ENCODE measurements at regions of chr4 and their contacts with region 1.

Region 1: GRCh38 chr4:54322818-54323417 is 93.8 kb downstream of the PDGFRA start:
- DNase-seq: peak; percentile 21
- H3K4me3 Mint-ChIP-seq: no peak overlapping the region
- H3K27ac Mint-ChIP-seq: no peak overlapping the region
- H3K4me1 Mint-ChIP-seq: peaks cover 15% of the 10 kb centered on the region
- H3K27me3 Mint-ChIP-seq: no peaks in the 10 kb centered on the region

Region 2: DNA sequence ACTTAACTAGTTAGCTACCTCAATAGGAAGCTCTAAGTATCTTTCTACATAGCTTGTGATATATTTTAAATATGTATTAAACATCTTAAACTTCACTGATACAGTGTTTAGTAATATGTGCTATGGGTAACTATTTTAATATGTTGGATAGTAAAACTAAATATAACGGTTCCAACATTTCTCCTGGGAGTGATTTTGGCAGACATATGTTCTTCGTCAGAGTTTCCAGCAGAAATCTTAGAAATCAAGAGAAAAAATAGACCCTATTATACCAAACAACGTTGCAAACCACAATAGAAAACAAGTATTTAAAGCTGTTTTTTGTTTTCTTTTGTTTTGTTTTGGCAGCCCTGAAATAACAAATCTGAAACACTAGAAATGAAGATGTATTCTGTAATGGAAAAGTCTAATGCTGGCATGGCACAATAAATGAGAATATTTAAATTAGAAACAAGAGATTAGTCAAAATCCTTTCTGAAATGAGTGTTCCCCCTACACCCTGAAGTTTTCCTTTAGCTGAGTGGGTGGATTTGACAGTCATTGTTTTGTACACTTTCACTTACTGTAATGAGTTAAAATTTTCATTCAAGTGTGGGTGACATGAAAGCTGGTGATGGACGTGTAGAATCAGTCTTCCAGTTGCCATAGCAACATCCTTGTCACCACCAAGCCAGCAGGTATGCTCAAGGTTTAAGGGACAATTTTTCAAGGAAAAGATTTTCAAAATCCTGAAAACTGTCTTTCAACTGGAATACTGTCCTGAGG is 1190.6 kb before region 1 on chr4:
- intact Hi-C with region 1: loop called (anchors 5 kb)
- DNase-seq: no peak
- H3K4me3 Mint-ChIP-seq: no peak overlapping the region
- H3K27ac Mint-ChIP-seq: peak overlapping the region; percentile 79
- H3K4me1 Mint-ChIP-seq: peaks cover 31% of the 10 kb centered on the region
- H3K27me3 Mint-ChIP-seq: no peaks in the 10 kb centered on the region

Region 3: DNA sequence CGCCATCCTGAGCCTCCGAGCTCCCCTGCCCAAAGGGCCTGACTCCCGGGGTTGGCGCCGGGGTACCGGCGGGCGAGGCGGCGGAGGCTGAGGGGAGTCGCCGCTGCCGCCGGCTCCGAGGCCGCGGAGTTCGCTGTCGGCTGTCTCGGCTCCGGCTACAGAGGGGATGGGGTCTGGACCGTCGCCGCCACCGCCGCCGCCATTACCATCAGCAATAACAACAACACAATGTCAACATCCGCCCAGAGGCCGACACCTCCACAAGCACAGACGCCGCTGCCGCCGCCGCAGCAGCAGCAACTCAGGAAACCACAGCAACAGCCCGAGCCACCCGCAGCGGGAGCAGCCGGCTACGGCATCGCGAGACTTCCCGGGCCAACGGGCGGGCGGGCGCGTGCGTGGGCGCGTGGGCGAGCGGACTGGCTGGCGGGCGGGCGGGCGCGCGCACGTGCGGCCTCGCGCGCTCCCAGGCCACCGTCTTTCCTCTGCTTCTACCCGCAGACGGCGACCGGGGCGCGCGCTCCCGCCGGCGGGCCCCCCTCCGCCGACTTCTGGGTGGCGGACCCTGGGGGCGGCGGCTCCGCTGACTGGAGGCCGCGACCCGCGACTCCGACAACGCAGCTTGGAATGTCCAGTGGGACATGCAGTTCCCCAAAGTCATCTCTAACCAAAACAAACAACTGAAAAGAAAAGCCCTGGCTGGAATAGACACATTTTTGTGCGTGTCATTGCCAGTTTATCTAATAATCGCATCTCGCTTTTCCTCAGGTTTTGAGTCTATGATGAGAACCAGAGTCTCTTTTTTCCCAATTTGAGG is 258.4 kb before region 1 on chr4 and contains the start of gene CHIC2:
- intact Hi-C with region 1: loop called (anchors 5 kb)
- DNase-seq: peak; percentile 96
- H3K4me3 Mint-ChIP-seq: peak within 1 kb of the TSS; percentile 91
- H3K27ac Mint-ChIP-seq: peak within 1 kb of the TSS; percentile 94
- H3K4me1 Mint-ChIP-seq: peaks cover 46% of the 10 kb centered on the region
- H3K27me3 Mint-ChIP-seq: no peaks in the 10 kb centered on the region
- total RNA-seq, gene CHIC2: 19.1 and 20.3 TPM in 2 replicates

Region 4: DNA sequence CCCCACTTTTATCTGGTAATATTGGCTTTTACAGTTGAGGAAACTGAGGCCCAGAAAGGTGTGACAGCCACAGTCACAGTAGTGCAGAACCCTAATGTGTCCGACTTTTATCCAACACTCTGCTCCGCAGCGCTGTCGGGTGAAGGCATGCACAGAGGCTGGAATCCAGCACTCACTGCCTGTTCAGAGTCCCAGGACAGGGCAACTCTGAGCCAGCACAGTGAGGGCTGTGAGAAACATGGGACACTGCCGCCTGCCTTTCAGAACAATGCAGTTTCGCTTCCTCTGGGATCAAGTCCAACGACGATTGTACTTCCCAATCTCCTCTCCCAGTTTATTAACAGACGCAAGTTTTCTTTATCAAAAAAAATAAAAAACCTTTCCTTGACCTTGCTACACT is 135.8 kb before region 1 on chr4:
- intact Hi-C with region 1: no loop called
- DNase-seq: no peak
- H3K4me3 Mint-ChIP-seq: no peak overlapping the region
- H3K27ac Mint-ChIP-seq: no peak overlapping the region
- H3K4me1 Mint-ChIP-seq: no peaks in the 10 kb centered on the region
- H3K27me3 Mint-ChIP-seq: no peaks in the 10 kb centered on the region

Region 5: GRCh38 chr4:54233277-54233696 is 89.6 kb before region 1 on chr4:
- intact Hi-C with region 1: no loop called
- DNase-seq: peak; percentile 64
- H3K4me3 Mint-ChIP-seq: peak overlapping the region; percentile 57
- H3K27ac Mint-ChIP-seq: no peak overlapping the region
- H3K4me1 Mint-ChIP-seq: peaks cover 12% of the 10 kb centered on the region
- H3K27me3 Mint-ChIP-seq: peaks cover 53% of the 10 kb centered on the region

Region 6: DNA sequence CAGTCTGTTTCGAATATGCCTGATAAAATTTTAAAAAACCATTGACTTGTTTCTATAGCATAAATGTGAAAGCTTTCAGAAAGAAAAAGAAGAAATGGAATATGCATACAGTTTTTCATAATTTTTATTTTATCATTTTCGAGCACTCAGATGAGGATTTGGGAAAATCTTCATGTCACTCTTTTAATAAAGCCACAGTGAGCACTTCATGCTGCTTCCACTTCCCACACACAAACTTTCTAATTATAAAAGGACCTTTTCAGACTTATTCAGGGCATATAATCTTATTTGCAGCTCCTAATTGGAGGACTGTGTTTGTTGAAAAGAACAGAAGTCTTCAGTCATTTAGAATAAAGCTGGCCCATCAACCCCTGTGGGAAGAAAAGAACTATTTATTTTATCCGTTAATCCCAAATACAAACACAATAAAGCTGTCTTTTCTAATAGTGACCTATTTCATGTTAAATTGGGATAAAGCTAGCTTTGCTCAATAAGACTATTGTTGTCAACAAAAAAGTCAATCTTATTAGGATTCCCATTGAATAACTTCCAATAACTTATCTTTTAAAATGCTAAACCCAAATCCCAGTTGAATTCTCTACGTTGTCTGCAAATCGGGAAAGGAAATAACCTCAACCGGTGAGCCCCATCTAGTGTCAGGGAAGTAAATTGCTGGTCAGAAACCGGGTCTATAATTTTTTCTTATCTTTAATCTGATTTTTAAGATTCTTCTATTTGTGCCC is 117.6 kb after region 1 on chr4:
- intact Hi-C with region 1: loop called (anchors 1 kb)
- DNase-seq: no peak
- H3K4me3 Mint-ChIP-seq: no peak overlapping the region
- H3K27ac Mint-ChIP-seq: no peak overlapping the region
- H3K4me1 Mint-ChIP-seq: no peaks in the 10 kb centered on the region
- H3K27me3 Mint-ChIP-seq: peaks cover 5% of the 10 kb centered on the region

Region 7: DNA sequence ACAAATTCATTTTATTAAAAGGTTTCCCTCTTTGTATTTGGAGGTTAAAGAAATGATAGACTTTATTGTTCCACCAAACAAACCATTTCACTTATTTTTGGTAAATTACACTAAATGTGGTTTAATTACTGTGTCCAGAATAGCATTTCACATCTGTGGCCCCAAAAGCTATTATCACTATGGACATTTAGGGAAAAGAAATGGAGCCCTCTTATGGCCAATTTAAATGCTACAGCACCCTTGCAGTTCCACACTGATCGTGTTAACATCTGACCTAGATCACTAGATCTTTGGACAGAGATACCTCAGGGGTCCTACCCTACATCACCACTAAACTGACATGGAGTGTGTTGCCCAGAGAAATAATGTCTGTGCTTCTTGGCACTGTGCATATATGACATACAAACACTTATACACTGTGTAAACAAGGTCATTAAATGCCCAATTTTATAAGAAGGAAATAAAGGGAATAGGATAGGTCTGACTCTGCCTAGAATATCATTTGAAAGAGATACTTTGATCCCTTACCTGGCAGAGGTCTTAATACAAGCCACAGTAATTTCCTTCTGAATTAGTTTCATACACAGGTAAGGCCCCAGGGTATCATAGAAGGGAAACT is 638.5 kb after region 1 on chr4:
- intact Hi-C with region 1: loop called (anchors 2 kb)
- DNase-seq: no peak
- H3K4me3 Mint-ChIP-seq: no peak overlapping the region
- H3K27ac Mint-ChIP-seq: no peak overlapping the region
- H3K4me1 Mint-ChIP-seq: peaks cover 6% of the 10 kb centered on the region
- H3K27me3 Mint-ChIP-seq: peaks cover 8% of the 10 kb centered on the region

Region 8: DNA sequence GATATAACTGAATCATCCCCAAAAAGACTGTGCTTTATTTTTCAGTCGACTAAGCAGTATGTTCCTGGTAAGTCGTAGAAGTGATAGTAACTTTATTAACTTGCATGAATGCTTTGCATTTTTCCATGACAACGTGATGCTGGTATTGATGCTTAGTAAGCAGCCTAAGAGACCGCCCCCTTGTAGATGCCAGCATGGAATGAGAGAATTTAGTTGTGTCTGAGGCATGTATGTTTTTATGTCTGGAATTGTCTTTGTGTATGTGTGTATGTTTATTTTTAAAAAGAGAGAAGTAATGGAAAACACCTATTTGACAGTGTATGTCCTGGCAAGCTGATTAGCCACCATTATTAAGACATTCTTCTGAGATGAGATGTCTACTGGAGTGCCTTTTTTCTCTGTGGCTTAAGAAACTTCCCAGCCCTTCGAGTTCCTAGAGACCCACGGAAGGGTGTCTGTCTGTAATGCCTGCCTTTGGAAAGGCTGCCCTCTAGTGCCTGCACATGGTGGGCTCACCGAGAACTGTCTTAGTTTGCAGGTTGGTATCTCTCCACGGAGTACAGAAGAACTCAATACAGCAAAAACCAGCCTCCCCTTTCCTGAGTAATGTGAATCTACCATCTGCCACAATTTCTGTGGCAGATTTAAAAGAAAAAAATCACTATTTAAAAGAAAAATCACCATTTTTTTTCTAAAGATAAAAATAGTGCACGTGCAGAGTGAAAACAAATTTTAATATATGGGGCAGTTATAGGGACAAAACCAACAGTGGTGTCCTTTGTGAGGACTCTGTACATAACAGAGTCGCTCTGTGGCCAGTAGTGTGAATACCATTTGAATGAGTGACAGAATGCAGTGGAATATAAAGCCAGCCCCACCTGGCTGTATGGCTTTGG is 1978.5 kb after region 1 on chr4:
- intact Hi-C with region 1: loop called (anchors 10 kb)
- DNase-seq: peak; percentile 49
- H3K4me3 Mint-ChIP-seq: peak overlapping the region; percentile 38
- H3K27ac Mint-ChIP-seq: no peak overlapping the region
- H3K4me1 Mint-ChIP-seq: peaks cover 11% of the 10 kb centered on the region
- H3K27me3 Mint-ChIP-seq: peaks cover 2% of the 10 kb centered on the region